ENCODE measurements at regions of chr10 and their contacts with region 1.

Region 1: DNA sequence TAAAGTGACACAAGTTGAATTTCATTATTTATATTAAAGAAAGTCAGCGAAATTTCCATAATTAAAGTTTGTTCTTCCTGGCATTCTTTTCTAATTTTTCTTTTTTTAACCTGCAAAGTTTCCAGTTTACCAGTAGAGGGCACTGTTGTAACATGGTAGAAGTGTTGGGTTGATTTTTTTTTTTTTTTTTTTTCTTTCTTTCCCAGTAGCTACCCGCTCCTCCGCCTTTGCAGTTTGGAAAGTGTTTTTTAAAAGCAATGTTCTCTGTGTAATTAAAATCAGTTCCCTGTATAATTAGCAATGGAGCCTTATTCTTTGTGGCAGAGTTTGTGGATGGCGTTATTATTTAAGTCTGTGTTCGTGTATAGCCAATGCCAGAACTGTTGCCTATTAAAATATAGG is 53.7 kb downstream of the TAF3 start:
- DNase-seq: no peak
- H3K4me3 ChIP-seq: peak overlapping the region in 1 of 2 donors; percentile 19
- H3K27ac ChIP-seq: no peak overlapping the region
- H3K4me1 ChIP-seq: no peaks in the 10 kb centered on the region
- H3K27me3 ChIP-seq: no peaks in the 10 kb centered on the region
- CTCF ChIP-seq: peak; percentile 50 to 64 (median 55)
- POLR2A ChIP-seq: no peak

Region 2: GRCh38 chr10:7788639-7789286 is 83.3 kb before region 1 on chr10:
- intact Hi-C with region 1: no loop called
- DNase-seq: no peak
- H3K4me3 ChIP-seq: peak overlapping the region; percentile 93 to 97
- H3K27ac ChIP-seq: peak overlapping the region; percentile 84
- H3K4me1 ChIP-seq: peaks cover 72% of the 10 kb centered on the region
- H3K27me3 ChIP-seq: no peaks in the 10 kb centered on the region
- CTCF ChIP-seq: no peak
- POLR2A ChIP-seq: no peak

Region 3: DNA sequence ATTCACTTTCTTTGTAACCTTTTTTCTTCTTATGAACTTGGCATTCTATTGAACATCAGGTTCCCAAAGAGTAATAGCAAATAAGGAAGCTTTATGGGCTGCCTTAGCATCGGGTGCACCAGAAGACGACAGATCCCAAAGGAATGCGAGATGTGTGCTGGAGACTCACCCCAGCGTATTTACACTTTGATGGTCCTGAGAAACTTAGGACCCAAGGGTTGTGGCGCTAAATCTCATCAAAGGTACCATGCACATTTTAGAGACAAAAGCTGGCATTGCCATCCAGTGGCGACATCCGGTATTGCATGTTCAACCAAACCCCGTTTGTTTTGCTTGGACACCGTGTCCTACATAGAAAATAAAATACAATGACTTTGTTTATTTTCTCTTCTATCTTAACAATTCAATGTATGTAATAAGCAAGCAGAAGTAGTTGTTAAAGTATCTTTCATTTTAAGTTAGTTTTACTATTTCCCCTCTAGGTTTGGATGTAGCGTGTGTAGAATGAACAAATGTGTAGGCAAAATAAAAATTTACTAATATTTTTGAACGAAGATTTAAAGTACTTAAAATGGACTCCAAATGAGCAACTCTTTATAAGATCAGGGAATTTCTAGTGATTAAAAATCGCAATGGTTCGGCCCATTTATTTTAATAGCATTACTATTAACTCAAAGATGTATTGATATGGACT is 1337.2 kb after region 1 on chr10:
- intact Hi-C with region 1: loop called (anchors 10 kb)
- DNase-seq: no peak
- H3K4me3 ChIP-seq: no peak overlapping the region
- H3K27ac ChIP-seq: no peak overlapping the region
- H3K4me1 ChIP-seq: peaks cover 4% of the 10 kb centered on the region
- H3K27me3 ChIP-seq: no peaks in the 10 kb centered on the region
- CTCF ChIP-seq: peak; percentile 51 to 75 (median 62)
- POLR2A ChIP-seq: no peak

Measured in vagina (tissue), 2 donors.